ENCODE measurements at regions of chr4 and their contacts with region 1.

Region 1: GRCh38 chr4:16026160-16026761 is 57.6 kb downstream of the PROM1 start:
- DNase-seq: peak in 2 of 5 donors; percentile 73 to 74
- H3K4me3 ChIP-seq: no peak overlapping the region
- H3K27ac ChIP-seq: no peak overlapping the region
- H3K4me1 ChIP-seq: peaks cover 0 to 7% (median 2%) of the 10 kb centered on the region in 3 donors
- H3K27me3 ChIP-seq: no peaks in the 10 kb centered on the region
- CTCF ChIP-seq: peak; percentile 85

Region 2: DNA sequence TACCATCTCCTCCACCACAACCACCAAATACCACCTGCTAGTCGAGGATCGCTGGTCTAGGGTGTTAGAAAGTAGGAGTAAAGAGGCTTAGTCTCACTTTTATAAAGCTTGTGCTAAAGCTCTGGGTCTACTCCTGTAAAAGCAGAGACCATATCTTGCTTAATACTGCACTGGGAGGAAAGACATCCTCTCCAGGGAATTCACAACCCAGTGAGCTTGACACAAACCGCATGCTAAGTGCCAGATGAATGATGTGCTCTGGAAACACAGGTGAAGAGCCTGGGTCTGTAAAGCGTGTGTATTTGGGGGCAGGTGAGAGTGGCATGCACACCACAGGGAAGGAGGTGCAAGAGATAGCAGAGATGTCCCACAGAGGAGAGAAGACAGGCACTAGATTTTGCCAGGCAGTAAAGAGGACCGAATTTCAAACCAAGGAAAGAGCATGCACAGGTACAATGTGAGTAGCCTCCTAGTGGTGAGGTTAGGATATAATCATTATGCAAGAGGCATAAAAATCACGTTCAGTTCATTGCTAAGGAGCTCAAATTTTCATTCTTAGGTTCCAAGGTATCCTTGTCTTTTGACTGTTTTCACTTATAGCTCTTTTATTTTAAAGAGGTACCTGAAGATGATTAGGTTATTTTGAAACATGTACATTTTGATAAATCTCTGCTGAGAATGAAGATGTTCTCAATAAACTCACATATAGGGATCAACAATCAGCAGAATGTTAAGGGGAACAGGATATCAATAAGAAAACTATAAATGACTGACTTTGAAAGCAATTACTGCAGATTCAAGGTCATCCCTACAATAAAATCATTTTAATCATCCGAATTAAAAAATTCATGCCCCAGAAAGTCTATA is 179.3 kb after region 1 on chr4:
- intact Hi-C with region 1: loop called (anchors 10 kb)
- DNase-seq: peak in 1 of 5 donors; percentile 43
- H3K4me3 ChIP-seq: no peak overlapping the region
- H3K27ac ChIP-seq: no peak overlapping the region
- H3K4me1 ChIP-seq: peaks cover 0 to 2% (median 0%) of the 10 kb centered on the region in 3 donors
- H3K27me3 ChIP-seq: no peaks in the 10 kb centered on the region
- CTCF ChIP-seq: peak; percentile 59

Region 3: DNA sequence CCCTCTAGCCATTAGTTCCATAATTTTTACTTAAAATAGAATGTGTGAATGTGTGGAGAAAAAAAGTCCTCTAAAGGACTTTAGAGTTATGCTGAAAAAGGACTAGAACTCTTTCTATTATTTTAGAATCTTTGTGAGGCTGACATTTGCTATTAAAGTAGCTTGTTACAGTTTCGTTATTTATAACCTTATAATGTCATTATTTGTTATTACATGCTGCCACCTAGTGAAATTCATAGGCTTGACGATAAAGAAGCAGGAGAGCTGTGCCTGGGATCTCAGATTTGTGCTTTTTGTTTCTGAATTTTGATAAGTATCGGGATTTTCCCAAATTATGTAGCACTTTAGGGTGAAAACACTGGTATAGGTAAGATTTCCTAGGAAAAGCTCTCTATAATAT is 238.5 kb after region 1 on chr4:
- intact Hi-C with region 1: loop called (anchors 5 kb)
- DNase-seq: peak in 2 of 5 donors; percentile 62 to 71
- H3K4me3 ChIP-seq: no peak overlapping the region
- H3K27ac ChIP-seq: no peak overlapping the region
- H3K4me1 ChIP-seq: peaks cover 0 to 3% (median 0%) of the 10 kb centered on the region in 3 donors
- H3K27me3 ChIP-seq: no peaks in the 10 kb centered on the region
- CTCF ChIP-seq: peak; percentile 67

Measured in kidney (tissue), 22 donors.